Vagina (tissue), 2 donors: ENCODE measurements at regions of chr20 and their contacts with region 1.

Region 1: GRCh38 chr20:56468316-56469082 is at the start of gene RTF2:
- DNase-seq: peak in 1 of 2 donors; percentile 90
- H3K4me3 ChIP-seq: peak within 1 kb of the TSS; percentile 78
- H3K27ac ChIP-seq: peak within 1 kb of the TSS; percentile 64
- H3K4me1 ChIP-seq: peaks cover 34% of the 10 kb centered on the region
- H3K27me3 ChIP-seq: no peaks in the 10 kb centered on the region
- CTCF ChIP-seq: no peak
- POLR2A ChIP-seq: no peak
- total RNA-seq, gene RTF2: 47.1 TPM

Region 2: GRCh38 chr20:56392282-56393137 is 76.0 kb before region 1 on chr20 and contains the start of gene CSTF1:
- intact Hi-C with region 1: loop called (anchors 10 kb)
- DNase-seq: peak; percentile 99 to 100
- H3K4me3 ChIP-seq: peak within 1 kb of the TSS; percentile 88 to 90
- H3K27ac ChIP-seq: peak within 1 kb of the TSS; percentile 85
- H3K4me1 ChIP-seq: peaks cover 20% of the 10 kb centered on the region
- H3K27me3 ChIP-seq: no peaks in the 10 kb centered on the region
- CTCF ChIP-seq: no peak
- POLR2A ChIP-seq: peak in 1 of 2 donors; percentile 20
- total RNA-seq, gene CSTF1: 27.0 TPM

Region 3: GRCh38 chr20:56513161-56514150 is 45.0 kb after region 1 on chr20:
- intact Hi-C with region 1: no loop called
- DNase-seq: no peak
- H3K4me3 ChIP-seq: no peak overlapping the region
- H3K27ac ChIP-seq: no peak overlapping the region
- H3K4me1 ChIP-seq: no peaks in the 10 kb centered on the region
- H3K27me3 ChIP-seq: no peaks in the 10 kb centered on the region
- CTCF ChIP-seq: no peak
- POLR2A ChIP-seq: no peak

Region 4: GRCh38 chr20:56540420-56540819 is 71.9 kb after region 1 on chr20:
- intact Hi-C with region 1: no loop called
- DNase-seq: no peak
- H3K4me3 ChIP-seq: no peak overlapping the region
- H3K27ac ChIP-seq: no peak overlapping the region
- H3K4me1 ChIP-seq: no peaks in the 10 kb centered on the region
- H3K27me3 ChIP-seq: no peaks in the 10 kb centered on the region
- CTCF ChIP-seq: no peak
- POLR2A ChIP-seq: no peak